ENCODE measurements at regions of chr1 and their contacts with region 1.

Region 1: DNA sequence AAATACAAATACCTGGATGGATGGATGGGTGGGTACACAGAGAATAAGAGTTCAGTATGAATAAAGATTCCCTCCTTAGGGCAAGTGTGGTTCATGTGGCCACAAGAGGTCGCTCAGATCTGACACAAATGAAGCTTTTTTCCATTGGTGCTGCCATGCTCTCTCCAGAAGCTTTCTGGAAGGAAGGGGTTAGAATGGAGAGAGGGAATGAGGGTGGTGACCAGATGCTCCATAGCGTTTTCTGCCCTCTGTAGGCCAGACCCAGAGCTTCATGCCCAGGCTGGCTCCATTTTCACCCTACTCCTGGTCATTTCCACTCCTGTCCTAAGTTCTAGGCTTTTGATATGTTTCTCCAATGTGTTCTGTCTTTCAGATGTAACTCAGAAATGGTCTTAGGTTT is 3.3 kb upstream of the FCRL6 start:
- DNase-seq: peak; percentile 77
- ATAC-seq: peak; percentile 90 to 93

Region 2: GRCh38 chr1:159891275-159892157 is 92.6 kb after region 1 on chr1:
- intact Hi-C with region 1: loop called (anchors 1 to 5 kb)
- DNase-seq: peak; percentile 87
- ATAC-seq: peak; percentile 88 to 94

Region 3: DNA sequence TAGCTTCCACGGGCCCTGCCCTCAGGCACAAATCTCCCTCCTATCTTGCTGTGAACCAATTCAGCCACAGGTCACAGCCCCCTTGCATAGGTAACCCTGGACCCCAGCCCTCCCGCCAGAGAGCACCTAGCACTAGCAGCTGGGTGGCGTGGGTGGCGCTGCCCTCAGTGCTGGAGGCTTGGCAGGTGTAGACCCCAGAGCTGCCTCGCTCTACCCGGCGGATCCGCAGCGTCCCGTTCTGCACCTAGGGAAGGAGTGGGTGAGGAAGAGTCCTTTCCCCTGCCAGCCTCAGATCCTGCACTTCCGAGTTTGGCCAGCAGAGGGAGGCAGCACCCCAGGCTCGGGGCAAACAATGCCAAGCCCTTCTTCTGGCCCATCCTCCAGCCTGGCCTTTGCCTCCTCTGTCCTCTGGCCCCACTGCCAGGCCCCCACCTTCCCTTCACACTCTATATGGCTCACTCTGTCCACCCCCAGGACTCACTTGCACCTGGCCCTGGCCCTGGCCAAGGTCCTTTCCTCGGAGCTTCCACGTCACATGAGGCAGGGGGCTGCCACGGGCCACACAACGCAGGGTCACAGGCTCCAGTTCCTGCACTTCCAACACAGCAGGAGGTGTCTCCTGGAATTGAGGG is 137.5 kb after region 1 on chr1:
- intact Hi-C with region 1: loop called in 1 of 2 experiments (anchors 5 kb)
- DNase-seq: peak; percentile 78
- ATAC-seq: peak; percentile 67 to 75

Region 4: DNA sequence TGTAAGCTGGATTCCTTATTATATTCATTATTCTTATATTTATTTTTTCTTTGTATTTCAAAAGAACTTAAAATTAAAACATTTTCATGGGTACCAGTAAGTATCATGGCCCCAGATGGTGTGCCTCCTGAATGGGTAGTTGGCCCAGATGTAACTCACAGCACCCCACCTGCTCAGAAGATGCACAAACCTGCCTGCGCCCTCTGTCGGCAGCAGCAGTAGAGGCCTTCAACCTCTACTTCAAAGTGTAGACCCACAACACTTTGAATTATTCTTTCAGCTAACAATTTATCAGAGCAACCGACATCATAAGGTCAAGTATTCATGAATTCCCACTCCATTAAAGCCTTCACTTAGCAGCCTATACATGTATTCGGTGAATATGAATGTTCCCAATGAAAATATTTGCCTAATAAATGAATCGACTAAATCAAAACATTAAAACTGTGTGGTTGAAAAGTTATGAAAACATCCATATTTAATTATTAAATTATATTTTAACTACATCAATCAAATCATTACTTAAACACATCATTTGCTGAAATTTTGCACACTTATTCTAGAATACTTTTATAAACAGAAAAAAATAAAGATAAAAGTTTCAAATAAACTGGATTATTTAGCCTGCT is 207.5 kb after region 1 on chr1:
- intact Hi-C with region 1: loop called in 1 of 2 experiments (anchors 5 kb)
- DNase-seq: peak; percentile 75
- ATAC-seq: peak in 1 of 2 donors; percentile 88

Measured in left cardiac atrium (tissue), 4 donors.